ENCODE measurements at regions of chr1 and their contacts with region 1.

Region 1: GRCh38 chr1:56578963-56579875 is at the start of gene PLPP3:
- DNase-seq: peak; percentile 92
- ATAC-seq: peak; percentile 91
- total RNA-seq, gene PLPP3: 143 TPM

Region 2: GRCh38 chr1:56189946-56190792 is 389.1 kb before region 1 on chr1:
- intact Hi-C with region 1: loop called (anchors 5 kb)
- DNase-seq: no peak
- ATAC-seq: no peak

Region 3: GRCh38 chr1:56376188-56376984 is 202.8 kb before region 1 on chr1:
- intact Hi-C with region 1: loop called (anchors 5 kb)
- DNase-seq: peak; percentile 62
- ATAC-seq: peak; percentile 39

Region 4: GRCh38 chr1:56446531-56447098 is 132.6 kb before region 1 on chr1:
- intact Hi-C with region 1: loop called (anchors 10 kb)
- DNase-seq: no peak
- ATAC-seq: peak; percentile 92

Region 5: DNA sequence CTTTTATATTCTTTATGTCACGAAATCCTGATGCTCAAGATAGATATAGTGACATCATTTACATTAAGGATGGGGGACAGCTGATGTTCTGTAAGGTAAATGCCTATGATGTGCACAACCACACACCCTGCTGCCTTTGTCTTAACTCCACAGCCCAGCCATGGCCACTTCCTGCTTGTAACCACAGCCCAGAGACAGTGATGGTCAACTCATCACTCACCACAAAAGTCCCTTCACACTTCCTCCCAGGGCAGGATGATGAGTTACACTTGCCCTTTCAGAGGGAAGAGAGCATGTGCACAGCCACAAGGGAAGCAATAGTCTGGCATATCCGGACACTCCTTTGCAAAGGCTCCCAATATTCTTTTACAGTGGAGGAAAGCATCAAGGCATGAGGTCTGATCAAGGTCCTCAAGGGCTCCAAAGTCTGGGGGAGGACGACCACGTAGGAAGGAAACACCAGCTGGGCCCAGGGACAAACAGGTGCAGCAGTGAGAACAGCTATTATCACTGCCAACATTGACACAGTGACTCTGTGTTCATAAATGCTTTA is 53.7 kb before region 1 on chr1:
- intact Hi-C with region 1: loop called (anchors 5 kb)
- DNase-seq: peak; percentile 74
- ATAC-seq: peak; percentile 55

Measured in Right ventricle myocardium inferior (tissue), 1 donor.